Naive thymus-derived CD8-positive, alpha-beta T cell (primary cell): ENCODE measurements at regions of chr3 and their contacts with region 1.

Region 1: GRCh38 chr3:32460031-32460749 is 42.5 kb downstream of the CMTM6 start:
- DNase-seq: peak; percentile 57 to 97 (median 88)
- ATAC-seq: peak; percentile 71 to 79
- H3K4me3 Mint-ChIP-seq: peak overlapping the region in 4 of 10 donors; percentile 79 to 88 (median 86)
- H3K27ac Mint-ChIP-seq: no peak overlapping the region
- H3K4me1 Mint-ChIP-seq: peaks cover 32 to 42% (median 36%) of the 10 kb centered on the region in 4 donors
- H3K27me3 Mint-ChIP-seq: no peaks in the 10 kb centered on the region

Region 2: GRCh38 chr3:32374788-32375595 is 85.2 kb before region 1 on chr3:
- POLR2A ChIA-PET with region 1: interaction called, 27 read pairs
- DNase-seq: peak; percentile 14 to 87 (median 74)
- ATAC-seq: peak; percentile 26 to 43
- H3K4me3 Mint-ChIP-seq: peak overlapping the region in 2 of 10 donors; percentile 34 to 54
- H3K27ac Mint-ChIP-seq: peak overlapping the region; percentile 1 to 96 (median 86)
- H3K4me1 Mint-ChIP-seq: peaks cover 11 to 44% (median 40%) of the 10 kb centered on the region in 4 donors
- H3K27me3 Mint-ChIP-seq: no peaks in the 10 kb centered on the region

Region 3: GRCh38 chr3:32391643-32392535 is 68.3 kb before region 1 on chr3 and contains the start of gene CMTM7:
- POLR2A ChIA-PET with region 1: interaction called, 33 read pairs
- DNase-seq: peak; percentile 24 to 79 (median 54)
- ATAC-seq: peak; percentile 57 to 68
- H3K4me3 Mint-ChIP-seq: peak within 1 kb of the TSS; percentile 90 to 99 (median 96)
- H3K27ac Mint-ChIP-seq: peak within 1 kb of the TSS; percentile 96 to 100 (median 98)
- H3K4me1 Mint-ChIP-seq: peaks cover 33 to 76% (median 61%) of the 10 kb centered on the region in 4 donors
- H3K27me3 Mint-ChIP-seq: no peaks in the 10 kb centered on the region
- polyA plus RNA-seq, gene CMTM7: 67.4 to 122 (median 98.5) TPM

Region 4: GRCh38 chr3:32401556-32402081 is 58.6 kb before region 1 on chr3:
- POLR2A ChIA-PET with region 1: interaction called, 47 read pairs
- DNase-seq: peak; percentile 37 to 81 (median 62)
- ATAC-seq: peak; percentile 70 to 78
- H3K4me3 Mint-ChIP-seq: peak overlapping the region; percentile 86 to 96 (median 94)
- H3K27ac Mint-ChIP-seq: peak overlapping the region; percentile 97 to 100 (median 99)
- H3K4me1 Mint-ChIP-seq: peaks cover 33 to 85% (median 83%) of the 10 kb centered on the region in 4 donors
- H3K27me3 Mint-ChIP-seq: no peaks in the 10 kb centered on the region

Region 5: DNA sequence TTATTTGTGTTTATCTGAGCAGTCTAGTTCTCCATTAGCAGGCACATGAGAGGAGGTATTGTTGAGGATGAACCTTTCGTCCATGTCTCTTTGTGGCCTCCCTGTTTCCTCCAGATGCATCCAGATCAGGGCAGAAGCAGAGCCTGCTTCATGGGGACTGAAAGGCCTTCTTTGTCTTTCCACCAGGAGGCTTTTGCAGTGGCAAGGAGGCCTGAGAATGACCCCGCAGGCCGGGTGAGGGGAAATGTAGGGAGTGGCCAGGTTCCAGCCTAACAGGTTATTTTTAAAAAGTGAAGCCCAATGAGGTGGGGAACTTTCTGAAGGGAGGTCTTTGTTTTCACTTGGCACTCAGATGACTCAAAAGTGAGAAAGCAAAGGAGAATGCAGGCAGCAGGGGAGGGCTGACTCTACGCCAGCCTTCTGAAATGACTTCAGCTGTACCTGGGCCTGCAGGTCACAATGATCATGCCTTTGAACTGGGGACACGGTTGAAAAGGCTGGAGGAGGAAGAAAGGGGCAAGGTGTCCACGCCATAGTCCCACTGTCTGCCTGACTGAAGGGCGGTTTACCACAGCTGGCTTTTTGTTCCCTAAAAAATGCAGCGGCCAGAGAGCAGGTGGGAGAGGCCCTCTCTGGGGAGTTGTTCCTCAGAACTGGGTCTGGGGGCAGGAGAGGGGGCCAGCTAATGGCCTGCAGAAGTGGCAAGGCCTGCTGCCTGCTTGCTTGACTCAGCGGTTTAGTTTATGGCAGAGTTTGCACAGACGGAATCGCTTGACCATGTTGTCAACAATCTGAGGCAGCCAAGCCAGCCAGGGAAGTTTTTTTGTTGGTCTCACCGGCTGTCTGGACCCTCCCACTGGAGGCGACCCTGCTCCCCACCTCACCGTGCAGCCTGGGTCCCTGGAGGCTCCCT is 39.8 kb before region 1 on chr3:
- POLR2A ChIA-PET with region 1: interaction called, 353 read pairs
- DNase-seq: peak in 1 of 10 donors; percentile 36
- ATAC-seq: peak; percentile 31 to 48
- H3K4me3 Mint-ChIP-seq: peak overlapping the region; percentile 68 to 83 (median 79)
- H3K27ac Mint-ChIP-seq: peak overlapping the region; percentile 93 to 100 (median 97)
- H3K4me1 Mint-ChIP-seq: peaks cover 60 to 100% (median 97%) of the 10 kb centered on the region in 4 donors
- H3K27me3 Mint-ChIP-seq: no peaks in the 10 kb centered on the region

Region 6: GRCh38 chr3:32438596-32439344 is 21.4 kb before region 1 on chr3:
- POLR2A ChIA-PET with region 1: interaction called, 246 read pairs
- DNase-seq: no peak
- ATAC-seq: peak; percentile 23 to 43
- H3K4me3 Mint-ChIP-seq: peak overlapping the region in 8 of 10 donors; percentile 2 to 74 (median 33)
- H3K27ac Mint-ChIP-seq: peak overlapping the region; percentile 44 to 91 (median 83)
- H3K4me1 Mint-ChIP-seq: peaks cover 27 to 89% (median 77%) of the 10 kb centered on the region in 4 donors
- H3K27me3 Mint-ChIP-seq: no peaks in the 10 kb centered on the region

Region 7: GRCh38 chr3:32448686-32449474 is 11.3 kb before region 1 on chr3:
- POLR2A ChIA-PET with region 1: interaction called, 246 read pairs
- DNase-seq: no peak
- ATAC-seq: no peak
- H3K4me3 Mint-ChIP-seq: no peak overlapping the region
- H3K27ac Mint-ChIP-seq: peak overlapping the region in 9 of 10 donors; percentile 25 to 92 (median 48)
- H3K4me1 Mint-ChIP-seq: peaks cover 20 to 54% (median 51%) of the 10 kb centered on the region in 4 donors
- H3K27me3 Mint-ChIP-seq: no peaks in the 10 kb centered on the region